Vagina (tissue), 2 donors: ENCODE measurements at regions of chr9 and their contacts with region 1.

Region 1: DNA sequence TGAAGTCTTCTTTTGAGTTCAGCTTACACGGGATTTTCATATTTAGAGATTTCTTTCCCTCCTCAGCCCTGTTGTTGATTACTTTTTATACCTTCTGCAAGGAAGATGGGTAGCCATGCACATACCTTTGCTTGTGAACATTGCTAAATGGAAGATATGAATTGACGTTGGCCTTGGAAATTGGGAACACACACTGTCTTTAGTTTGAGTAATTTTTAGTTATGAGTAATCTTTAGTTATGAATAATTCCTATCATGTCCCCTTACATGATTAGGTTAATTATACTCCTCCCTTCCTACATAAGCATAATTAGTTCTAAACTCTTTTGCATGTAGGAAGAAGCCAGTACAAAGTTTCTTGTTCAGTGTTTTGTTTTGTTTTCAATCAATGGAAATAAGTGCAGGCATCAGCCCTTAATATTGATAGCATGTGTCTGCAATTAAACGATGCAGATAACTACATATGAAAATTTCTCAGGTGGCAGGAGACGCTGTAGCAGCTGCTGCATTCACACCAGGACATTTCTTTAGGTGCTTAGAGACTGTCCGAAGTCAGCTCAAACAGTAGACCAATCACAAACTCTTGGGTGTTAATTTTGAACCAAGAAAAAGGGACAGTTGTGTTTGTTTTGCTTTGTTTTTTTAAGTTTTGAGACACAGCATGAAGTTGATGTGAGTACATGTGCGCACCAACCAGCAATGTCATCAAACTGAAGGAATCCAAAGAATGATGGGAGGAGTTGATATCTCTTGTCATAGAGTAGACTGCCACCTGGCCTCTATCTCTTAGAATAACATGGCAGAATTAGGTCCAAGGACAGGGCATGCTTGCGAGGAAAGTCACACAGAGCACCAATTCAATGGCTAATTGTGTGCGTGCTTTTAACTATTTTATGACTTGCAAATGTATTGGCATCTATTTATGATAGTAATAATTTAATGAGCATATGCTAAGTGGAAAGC is 51.4 kb downstream of the SMARCA2 start:
- DNase-seq: no peak
- H3K4me3 ChIP-seq: no peak overlapping the region
- H3K27ac ChIP-seq: no peak overlapping the region
- H3K4me1 ChIP-seq: no peaks in the 10 kb centered on the region
- H3K27me3 ChIP-seq: no peaks in the 10 kb centered on the region
- CTCF ChIP-seq: peak in 1 of 3 experiments; percentile 6
- POLR2A ChIP-seq: no peak

Region 2: DNA sequence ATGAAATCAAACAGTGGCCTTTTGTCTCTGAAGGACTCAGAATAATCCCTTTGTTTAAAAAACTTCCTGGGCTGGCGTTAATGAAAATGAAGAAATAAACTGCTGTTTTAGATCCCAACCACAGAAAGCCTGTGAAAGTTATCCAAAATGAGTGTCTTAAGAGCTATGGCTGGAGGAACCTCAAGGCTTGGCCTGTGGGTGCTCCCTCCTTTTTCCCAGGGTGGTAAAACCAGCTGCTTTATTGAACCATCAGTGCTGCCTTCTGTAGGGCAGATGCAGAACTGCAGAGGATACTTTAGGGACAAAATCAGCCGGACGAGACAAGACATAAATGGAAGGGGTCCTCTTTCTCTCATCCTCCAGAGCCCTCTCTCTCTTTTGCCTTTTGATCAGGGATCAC is 49.5 kb after region 1 on chr9:
- intact Hi-C with region 1: loop called (anchors 5 kb)
- DNase-seq: no peak
- H3K4me3 ChIP-seq: no peak overlapping the region
- H3K27ac ChIP-seq: no peak overlapping the region
- H3K4me1 ChIP-seq: peaks cover 4% of the 10 kb centered on the region
- H3K27me3 ChIP-seq: no peaks in the 10 kb centered on the region
- CTCF ChIP-seq: peak in 1 of 3 experiments; percentile 10
- POLR2A ChIP-seq: no peak

Region 3: GRCh38 chr9:2192356-2192979 is 125.9 kb after region 1 on chr9:
- intact Hi-C with region 1: no loop called
- DNase-seq: no peak
- H3K4me3 ChIP-seq: no peak overlapping the region
- H3K27ac ChIP-seq: no peak overlapping the region
- H3K4me1 ChIP-seq: no peaks in the 10 kb centered on the region
- H3K27me3 ChIP-seq: no peaks in the 10 kb centered on the region
- CTCF ChIP-seq: no peak
- POLR2A ChIP-seq: no peak

Region 4: DNA sequence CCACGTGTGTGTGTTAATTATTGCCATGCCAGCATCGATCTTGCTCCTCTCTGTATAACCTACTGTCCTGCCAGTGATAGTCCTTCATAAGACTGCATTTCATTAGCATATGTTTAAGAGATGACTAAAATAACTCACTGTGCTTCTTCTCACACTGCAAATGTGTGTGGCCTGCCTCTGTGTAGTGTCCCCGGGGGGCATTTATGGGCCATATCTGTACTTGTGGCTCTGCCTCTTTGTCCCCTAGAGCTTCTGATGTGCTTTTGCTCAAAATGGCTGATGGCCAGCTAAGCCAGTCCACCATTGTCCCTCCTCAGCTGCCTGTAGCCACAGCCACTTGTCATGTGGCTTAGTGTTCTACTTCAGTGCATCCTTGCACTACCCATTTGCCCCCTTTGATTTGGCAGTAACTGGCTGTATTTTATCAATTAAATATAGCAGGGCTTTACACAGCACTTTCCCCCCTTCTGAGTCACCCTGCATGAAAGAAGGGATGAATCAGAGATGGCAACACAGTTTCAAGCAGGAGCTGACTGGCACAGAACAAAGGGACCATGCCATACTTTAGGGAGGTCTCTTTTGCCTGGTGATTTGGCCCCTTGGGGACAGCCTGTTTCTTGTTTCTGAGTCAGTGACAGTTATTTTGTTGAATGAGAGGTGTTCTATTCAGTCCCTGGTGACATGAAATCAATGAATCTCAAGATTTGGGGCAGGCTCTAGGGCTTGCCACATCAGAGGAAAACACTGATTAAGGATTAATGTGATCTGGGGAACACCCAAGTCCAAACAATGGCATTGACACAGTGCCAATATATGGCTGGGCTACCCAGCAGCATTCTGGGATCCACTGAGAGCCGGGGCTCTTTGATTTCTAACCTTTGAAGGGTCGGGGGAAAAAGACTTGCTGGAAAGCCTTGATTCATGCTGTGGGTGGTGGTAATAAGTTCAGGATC is 194.0 kb after region 1 on chr9:
- intact Hi-C with region 1: no loop called
- DNase-seq: no peak
- H3K4me3 ChIP-seq: no peak overlapping the region
- H3K27ac ChIP-seq: no peak overlapping the region
- H3K4me1 ChIP-seq: peaks cover 13% of the 10 kb centered on the region
- H3K27me3 ChIP-seq: no peaks in the 10 kb centered on the region
- CTCF ChIP-seq: no peak
- POLR2A ChIP-seq: no peak